MCF 10A (cell line): ENCODE measurements at regions of chr16 and their contacts with region 1.

Region 1: DNA sequence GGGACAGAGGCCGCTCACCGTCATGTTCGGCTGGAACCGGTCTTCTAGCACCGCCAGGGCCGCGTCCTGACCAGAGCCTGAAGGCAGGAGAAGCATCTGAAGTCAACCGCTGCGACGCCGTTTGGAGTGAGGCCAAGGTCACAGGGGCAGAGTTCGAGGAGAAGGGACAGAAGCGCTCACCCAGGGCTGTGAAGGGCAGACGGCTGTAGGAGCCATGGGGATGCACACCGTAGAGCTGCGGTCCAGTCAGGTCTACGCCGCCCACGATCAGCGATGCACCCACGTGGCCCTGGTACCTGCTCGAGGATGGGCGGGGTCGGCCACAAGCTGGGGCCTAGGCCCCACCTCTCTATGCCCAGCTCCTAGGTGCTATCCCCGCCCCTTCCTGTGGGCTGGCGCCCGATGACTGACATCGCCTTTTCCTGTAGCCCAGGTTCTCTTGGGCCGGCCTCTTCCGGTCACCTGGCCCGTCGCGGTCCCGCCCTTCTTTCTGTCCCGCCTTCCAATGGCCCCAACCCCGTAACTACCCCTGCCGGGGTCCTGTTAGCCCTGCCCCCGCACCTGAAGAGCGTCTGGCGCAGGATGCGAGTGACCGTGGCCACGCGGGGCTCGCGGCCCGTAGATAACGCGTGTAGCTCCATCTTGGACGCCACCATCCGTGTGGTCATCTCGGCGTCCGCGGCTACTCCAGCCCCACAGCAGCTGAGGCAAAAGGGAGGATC is 1.1 kb downstream of the PSMB10 start:
- DNase-seq: peak; percentile 98
- H3K4me3 Mint-ChIP-seq: peak overlapping the region; percentile 100
- H3K27ac Mint-ChIP-seq: peak overlapping the region; percentile 98
- H3K4me1 Mint-ChIP-seq: peaks cover 32% of the 10 kb centered on the region
- H3K27me3 Mint-ChIP-seq: no peaks in the 10 kb centered on the region
- CTCF ChIP-seq: no peak

Region 2: DNA sequence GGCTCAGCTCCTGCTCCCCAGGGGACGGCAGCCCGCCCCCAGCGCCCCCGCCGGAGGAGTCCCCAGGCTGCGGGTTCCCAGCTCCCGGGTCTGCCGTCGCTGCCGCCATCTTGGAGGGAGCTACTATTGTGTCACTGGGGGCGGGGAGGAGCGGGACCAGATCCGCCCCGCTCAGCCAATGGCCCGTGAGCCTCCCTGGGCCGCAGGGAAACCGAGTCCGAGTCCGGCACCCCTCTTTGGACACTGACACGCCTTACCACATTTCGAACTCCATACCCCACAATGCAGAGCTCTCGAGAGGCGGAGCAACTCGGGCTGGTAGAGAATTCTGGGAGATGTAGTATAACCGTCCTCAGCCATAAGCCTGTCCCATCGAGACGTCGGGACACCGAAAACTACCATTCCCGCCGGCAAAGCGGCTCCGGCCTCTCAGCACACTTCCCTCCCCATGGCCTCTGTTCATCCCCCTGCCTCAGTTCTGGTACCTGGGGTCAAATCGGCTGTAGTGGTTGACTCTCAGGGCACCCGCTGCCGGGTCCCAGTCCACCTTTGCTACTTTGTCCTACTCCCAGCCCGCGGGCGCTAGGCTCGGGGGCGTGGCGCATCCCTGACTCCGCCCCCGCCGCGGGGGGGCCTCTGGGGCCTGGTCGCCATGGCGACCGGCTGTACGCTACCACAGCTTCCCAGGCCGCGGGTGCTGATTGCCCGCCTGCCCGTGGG is 129.0 kb before region 1 on chr16 and contains the starts of genes RANBP10 and TSNAXIP1:
- CTCF ChIA-PET with region 1: no interaction called
- POLR2A ChIA-PET with region 1: interaction called, 16 read pairs
- intact Hi-C with region 1: no loop called
- DNase-seq: peak; percentile 99
- H3K4me3 Mint-ChIP-seq: peak within 1 kb of the TSS; percentile 90
- H3K27ac Mint-ChIP-seq: peak within 1 kb of the TSS; percentile 89
- H3K4me1 Mint-ChIP-seq: peaks cover 5% of the 10 kb centered on the region
- H3K27me3 Mint-ChIP-seq: no peaks in the 10 kb centered on the region
- CTCF ChIP-seq: no peak
- total RNA-seq, gene RANBP10: 17.2 and 21.7 TPM in 2 replicates
- total RNA-seq, gene TSNAXIP1: 1.1 and 1.5 TPM in 2 replicates

Region 3: GRCh38 chr16:67841764-67842508 is 93.6 kb before region 1 on chr16 and contains the start of gene THAP11:
- CTCF ChIA-PET with region 1: interaction called, 3 read pairs
- POLR2A ChIA-PET with region 1: interaction called, 31 read pairs
- intact Hi-C with region 1: no loop called
- DNase-seq: peak; percentile 97
- H3K4me3 Mint-ChIP-seq: peak within 1 kb of the TSS; percentile 84
- H3K27ac Mint-ChIP-seq: peak within 1 kb of the TSS; percentile 86
- H3K4me1 Mint-ChIP-seq: peaks cover 16% of the 10 kb centered on the region
- H3K27me3 Mint-ChIP-seq: no peaks in the 10 kb centered on the region
- CTCF ChIP-seq: peak; percentile 85
- total RNA-seq, gene THAP11: 18.3 and 20.5 TPM in 2 replicates

Region 4: DNA sequence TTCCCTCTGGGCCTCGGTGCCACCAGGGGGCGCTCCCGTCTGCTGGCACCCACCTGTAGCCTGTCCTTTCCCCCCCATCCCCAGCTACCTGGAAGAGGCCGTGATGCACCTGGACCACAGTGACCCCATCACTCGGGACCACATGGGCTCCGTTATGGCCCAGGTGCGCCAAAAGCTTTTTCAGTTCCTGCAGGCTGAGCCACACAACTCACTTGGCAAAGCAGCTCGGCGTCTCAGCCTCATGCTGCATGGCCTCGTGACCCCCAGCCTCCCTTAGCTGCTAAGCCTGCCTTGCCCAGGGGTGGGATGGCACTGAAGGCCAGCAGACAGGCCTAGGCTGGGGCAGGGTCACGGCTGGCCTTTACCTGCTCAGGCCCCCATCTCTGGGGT is 51.7 kb before region 1 on chr16:
- CTCF ChIA-PET with region 1: interaction called, 6 read pairs
- POLR2A ChIA-PET with region 1: interaction called, 15 read pairs
- intact Hi-C with region 1: no loop called
- DNase-seq: peak; percentile 57
- H3K4me3 Mint-ChIP-seq: no peak overlapping the region
- H3K27ac Mint-ChIP-seq: peak overlapping the region; percentile 72
- H3K4me1 Mint-ChIP-seq: peaks cover 17% of the 10 kb centered on the region
- H3K27me3 Mint-ChIP-seq: no peaks in the 10 kb centered on the region
- CTCF ChIP-seq: peak; percentile 80

Region 5: GRCh38 chr16:67953641-67954375 is 18.2 kb after region 1 on chr16:
- CTCF ChIA-PET with region 1: interaction called, 4 read pairs
- POLR2A ChIA-PET with region 1: interaction called, 45 read pairs
- intact Hi-C with region 1: no loop called
- DNase-seq: no peak
- H3K4me3 Mint-ChIP-seq: no peak overlapping the region
- H3K27ac Mint-ChIP-seq: no peak overlapping the region
- H3K4me1 Mint-ChIP-seq: peaks cover 4% of the 10 kb centered on the region
- H3K27me3 Mint-ChIP-seq: no peaks in the 10 kb centered on the region
- CTCF ChIP-seq: no peak

Region 6: GRCh38 chr16:68022704-68023522 is 87.3 kb after region 1 on chr16 and contains the starts of genes DDX28 and DUS2:
- CTCF ChIA-PET with region 1: interaction called, 3 read pairs
- POLR2A ChIA-PET with region 1: interaction called, 20 read pairs
- intact Hi-C with region 1: no loop called
- DNase-seq: peak; percentile 89
- H3K4me3 Mint-ChIP-seq: peak within 1 kb of the TSS; percentile 94
- H3K27ac Mint-ChIP-seq: peak within 1 kb of the TSS; percentile 96
- H3K4me1 Mint-ChIP-seq: peaks cover 5% of the 10 kb centered on the region
- H3K27me3 Mint-ChIP-seq: no peaks in the 10 kb centered on the region
- CTCF ChIP-seq: no peak
- total RNA-seq, gene DDX28: 9.3 and 11.7 TPM in 2 replicates
- total RNA-seq, gene DUS2: 24.2 and 26.4 TPM in 2 replicates

Region 7: DNA sequence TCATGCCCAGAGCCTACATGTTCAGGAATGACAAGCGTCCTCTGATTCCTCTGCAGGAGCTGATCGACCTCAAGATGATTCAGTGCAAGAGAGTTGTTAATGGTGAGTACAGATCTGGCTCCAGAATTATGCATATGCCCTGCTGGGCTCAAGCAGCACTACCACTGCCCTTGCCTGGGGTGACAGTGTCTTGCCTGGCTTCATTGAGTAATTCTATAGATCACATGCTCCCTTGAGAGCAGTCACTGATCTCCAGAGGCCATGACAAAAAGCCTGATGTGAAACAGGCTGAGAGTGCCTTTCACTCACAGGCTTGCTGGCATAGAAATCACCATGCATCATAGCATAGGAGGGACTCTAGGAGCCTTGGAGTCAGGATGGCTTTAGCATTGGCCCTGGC is 113.9 kb after region 1 on chr16:
- CTCF ChIA-PET with region 1: no interaction called
- POLR2A ChIA-PET with region 1: no interaction called
- intact Hi-C with region 1: no loop called
- DNase-seq: no peak
- H3K4me3 Mint-ChIP-seq: no peak overlapping the region
- H3K27ac Mint-ChIP-seq: no peak overlapping the region
- H3K4me1 Mint-ChIP-seq: no peaks in the 10 kb centered on the region
- H3K27me3 Mint-ChIP-seq: no peaks in the 10 kb centered on the region
- CTCF ChIP-seq: no peak